Activated naive CD4-positive, alpha-beta T cell treated with anti-CD3 and anti-CD28 coated beads for 36 hours (primary cell): ENCODE measurements at regions of chr3 and their contacts with region 1.

Region 1: GRCh38 chr3:51498876-51499738 is 708 bp downstream of the DCAF1 start:
- DNase-seq: peak; percentile 91
- H3K4me3 Mint-ChIP-seq: peak overlapping the region; percentile 98
- H3K27ac Mint-ChIP-seq: peak overlapping the region; percentile 98
- H3K4me1 Mint-ChIP-seq: peaks cover 21% of the 10 kb centered on the region
- H3K27me3 Mint-ChIP-seq: no peaks in the 10 kb centered on the region

Region 2: GRCh38 chr3:50568947-50569749 is 930.0 kb before region 1 on chr3 and contains the start of gene HEMK1:
- CTCF ChIA-PET with region 1: no interaction called
- intact Hi-C with region 1: loop called (anchors 5 kb)
- DNase-seq: peak; percentile 97
- H3K4me3 Mint-ChIP-seq: peak within 1 kb of the TSS; percentile 98
- H3K27ac Mint-ChIP-seq: peak within 1 kb of the TSS; percentile 95
- H3K4me1 Mint-ChIP-seq: peaks cover 55% of the 10 kb centered on the region
- H3K27me3 Mint-ChIP-seq: no peaks in the 10 kb centered on the region
- total RNA-seq, gene HEMK1: 27.0 to 30.4 TPM

Region 3: GRCh38 chr3:51530490-51530889 is 31.4 kb after region 1 on chr3:
- CTCF ChIA-PET with region 1: interaction called, 10 read pairs
- intact Hi-C with region 1: no loop called
- DNase-seq: no peak
- H3K4me3 Mint-ChIP-seq: no peak overlapping the region
- H3K27ac Mint-ChIP-seq: no peak overlapping the region
- H3K4me1 Mint-ChIP-seq: peaks cover 2% of the 10 kb centered on the region
- H3K27me3 Mint-ChIP-seq: no peaks in the 10 kb centered on the region

Region 4: DNA sequence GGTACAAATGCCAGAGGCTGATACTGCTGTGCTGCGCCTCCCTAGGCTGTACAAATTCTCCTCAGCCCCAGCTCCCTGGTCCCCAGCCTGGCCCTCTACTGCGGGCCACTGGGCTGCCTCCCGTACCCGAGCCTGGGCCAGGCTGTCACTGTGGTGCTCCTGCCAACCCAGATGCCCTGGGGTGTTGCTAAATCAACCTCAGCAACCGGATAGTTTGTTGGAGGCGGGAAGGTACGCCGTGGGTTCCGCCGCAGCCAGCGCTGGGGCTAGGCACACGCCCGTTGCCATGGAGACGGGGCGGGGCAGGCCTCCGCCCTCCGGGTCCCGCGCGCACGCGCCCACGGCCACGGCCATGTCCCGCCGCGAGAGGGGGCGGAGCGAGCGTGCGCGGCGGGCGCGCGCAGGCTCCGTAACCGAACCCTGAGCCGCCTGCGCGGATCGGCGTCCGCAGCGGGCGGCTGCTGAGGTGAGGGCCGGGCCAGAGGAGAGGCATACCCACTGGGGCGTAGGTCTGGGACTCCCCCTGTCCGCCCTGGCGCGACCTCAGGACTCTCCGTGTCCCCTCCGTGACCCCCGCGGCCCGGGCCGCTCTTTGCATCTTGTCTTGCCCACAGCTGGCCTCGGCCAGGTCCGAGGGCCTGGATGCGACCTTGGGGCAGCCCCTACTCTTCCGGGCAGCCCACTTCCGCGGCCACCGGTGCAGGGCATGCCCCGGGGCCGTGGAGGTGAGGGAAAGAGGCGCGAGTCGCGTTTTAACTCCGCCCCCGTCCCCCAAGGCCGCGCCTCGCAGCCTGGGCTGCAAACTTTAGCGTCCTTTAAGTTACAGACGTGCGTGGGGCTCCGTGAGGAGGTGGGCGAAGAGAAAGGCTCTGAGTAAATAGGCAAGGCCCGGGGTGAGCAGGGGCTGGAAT is 172.0 kb after region 1 on chr3 and contains the start of gene TEX264:
- CTCF ChIA-PET with region 1: interaction called, 146 read pairs
- intact Hi-C with region 1: loop called (anchors 1 kb)
- DNase-seq: peak; percentile 85
- H3K4me3 Mint-ChIP-seq: peak within 1 kb of the TSS; percentile 85
- H3K27ac Mint-ChIP-seq: peak within 1 kb of the TSS; percentile 66
- H3K4me1 Mint-ChIP-seq: peaks cover 61% of the 10 kb centered on the region
- H3K27me3 Mint-ChIP-seq: no peaks in the 10 kb centered on the region
- total RNA-seq, gene TEX264: 23.7 to 26.6 TPM

Region 5: DNA sequence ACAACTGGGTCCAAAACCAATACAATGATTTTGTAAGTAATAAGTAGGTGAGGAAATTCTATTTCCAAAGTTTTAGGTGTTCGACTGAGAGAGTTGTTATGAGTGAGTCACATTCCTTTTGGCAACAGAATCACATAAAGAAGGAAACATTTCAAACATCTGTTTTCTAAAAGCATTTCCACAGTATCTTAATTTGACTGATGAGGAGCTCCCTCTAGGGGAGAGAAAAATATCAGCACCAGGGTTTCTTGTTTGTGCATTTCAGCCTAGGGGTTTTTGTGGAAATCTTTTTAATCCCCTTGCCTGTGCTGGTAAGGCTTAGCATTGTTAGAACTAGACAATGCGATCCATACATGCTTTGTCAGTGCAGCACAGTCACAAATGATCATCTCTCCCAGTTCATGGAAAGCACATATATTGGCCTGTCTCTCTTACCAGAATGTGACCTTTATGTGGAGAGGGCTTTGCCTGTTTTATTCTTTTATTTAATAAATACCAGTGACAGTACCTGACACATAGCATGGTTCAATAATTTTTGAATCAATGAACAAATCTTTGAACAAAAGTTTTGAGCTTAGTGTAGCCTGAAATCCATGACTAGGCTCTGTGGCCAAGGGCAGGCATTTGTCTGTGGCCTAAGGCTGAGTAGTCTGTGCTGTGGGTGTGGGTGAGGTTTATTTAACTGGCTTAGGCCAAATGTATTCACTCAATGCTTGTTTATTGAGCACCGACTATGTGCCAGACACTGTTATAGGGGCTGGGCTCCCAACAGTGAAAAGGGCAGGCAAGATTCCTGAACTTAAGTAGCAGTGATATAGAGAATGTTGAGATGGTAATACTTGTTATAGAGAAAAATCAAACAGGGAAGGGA is 301.0 kb after region 1 on chr3:
- CTCF ChIA-PET with region 1: interaction called, 4 read pairs
- intact Hi-C with region 1: loop called (anchors 1 kb)
- DNase-seq: peak; percentile 35
- H3K4me3 Mint-ChIP-seq: no peak overlapping the region
- H3K27ac Mint-ChIP-seq: no peak overlapping the region
- H3K4me1 Mint-ChIP-seq: peaks cover 22% of the 10 kb centered on the region
- H3K27me3 Mint-ChIP-seq: peaks cover 5% of the 10 kb centered on the region

Region 6: GRCh38 chr3:52154117-52155094 is 655.3 kb after region 1 on chr3 and contains the start of gene POC1A:
- CTCF ChIA-PET with region 1: no interaction called
- intact Hi-C with region 1: loop called (anchors 1 kb)
- DNase-seq: peak; percentile 96
- H3K4me3 Mint-ChIP-seq: peak within 1 kb of the TSS; percentile 91
- H3K27ac Mint-ChIP-seq: peak within 1 kb of the TSS; percentile 92
- H3K4me1 Mint-ChIP-seq: peaks cover 18% of the 10 kb centered on the region
- H3K27me3 Mint-ChIP-seq: no peaks in the 10 kb centered on the region
- total RNA-seq, gene POC1A: 32.3 to 32.7 TPM